Caco-2 (cell line): ENCODE measurements at regions of chrX and their contacts with region 1.

Region 1: GRCh38 chrX:33434256-33435092 is 223.1 kb upstream of the DMD start:
- DNase-seq: peak; percentile 40 to 58
- H3K4me3 ChIP-seq: no peak overlapping the region
- H3K4me3 Mint-ChIP-seq: no peak overlapping the region
- H3K27ac Mint-ChIP-seq: no peak overlapping the region
- H3K4me1 ChIP-seq: no peaks in the 10 kb centered on the region
- H3K4me1 Mint-ChIP-seq: no peaks in the 10 kb centered on the region
- H3K27me3 ChIP-seq: no peaks in the 10 kb centered on the region
- H3K27me3 Mint-ChIP-seq: peaks cover 6% of the 10 kb centered on the region
- CTCF ChIP-seq: peak; percentile 64 to 69

Region 2: GRCh38 chrX:34275699-34276098 is 841.2 kb after region 1 on chrX:
- CTCF ChIA-PET with region 1: no interaction called
- POLR2A ChIA-PET with region 1: no interaction called
- intact Hi-C with region 1: loop called (anchors 1 kb)
- DNase-seq: no peak
- H3K4me3 ChIP-seq: no peak overlapping the region
- H3K4me3 Mint-ChIP-seq: no peak overlapping the region
- H3K27ac Mint-ChIP-seq: no peak overlapping the region
- H3K4me1 ChIP-seq: no peaks in the 10 kb centered on the region
- H3K4me1 Mint-ChIP-seq: no peaks in the 10 kb centered on the region
- H3K27me3 ChIP-seq: no peaks in the 10 kb centered on the region
- H3K27me3 Mint-ChIP-seq: no peaks in the 10 kb centered on the region
- CTCF ChIP-seq: peak in 1 of 2 experiments; percentile 17

Region 3: DNA sequence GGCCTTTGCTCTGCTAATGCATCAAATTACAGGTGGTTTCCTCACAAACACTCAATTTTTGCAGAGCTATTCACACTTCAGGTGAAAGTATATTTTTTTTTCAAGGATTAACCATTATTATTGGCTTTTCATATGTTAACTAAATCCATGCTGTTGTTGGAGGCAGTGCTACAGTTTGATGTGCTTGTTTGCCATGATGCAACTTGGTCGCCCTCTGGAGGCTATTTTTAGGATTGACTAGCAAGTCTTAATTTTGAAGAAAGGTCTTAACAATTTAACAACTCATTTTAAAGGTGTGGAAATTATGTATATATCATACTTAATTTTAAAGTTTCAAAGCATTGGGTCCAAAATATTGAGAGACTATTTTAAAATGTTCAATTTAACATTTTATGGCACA is 866.4 kb after region 1 on chrX:
- CTCF ChIA-PET with region 1: no interaction called
- POLR2A ChIA-PET with region 1: no interaction called
- intact Hi-C with region 1: loop called (anchors 1 kb)
- DNase-seq: peak in 1 of 2 experiments; percentile 38
- H3K4me3 ChIP-seq: no peak overlapping the region
- H3K4me3 Mint-ChIP-seq: no peak overlapping the region
- H3K27ac Mint-ChIP-seq: no peak overlapping the region
- H3K4me1 ChIP-seq: no peaks in the 10 kb centered on the region
- H3K4me1 Mint-ChIP-seq: peaks cover 10% of the 10 kb centered on the region
- H3K27me3 ChIP-seq: no peaks in the 10 kb centered on the region
- H3K27me3 Mint-ChIP-seq: peaks cover 3% of the 10 kb centered on the region
- CTCF ChIP-seq: peak in 1 of 2 experiments; percentile 51

Region 4: GRCh38 chrX:34332334-34332733 is 897.9 kb after region 1 on chrX:
- CTCF ChIA-PET with region 1: interaction called, 3 read pairs
- POLR2A ChIA-PET with region 1: no interaction called
- intact Hi-C with region 1: loop called (anchors 2 kb)
- DNase-seq: peak in 1 of 2 experiments; percentile 0
- H3K4me3 ChIP-seq: no peak overlapping the region
- H3K4me3 Mint-ChIP-seq: no peak overlapping the region
- H3K27ac Mint-ChIP-seq: no peak overlapping the region
- H3K4me1 ChIP-seq: no peaks in the 10 kb centered on the region
- H3K4me1 Mint-ChIP-seq: no peaks in the 10 kb centered on the region
- H3K27me3 ChIP-seq: no peaks in the 10 kb centered on the region
- H3K27me3 Mint-ChIP-seq: no peaks in the 10 kb centered on the region
- CTCF ChIP-seq: peak in 1 of 2 experiments; percentile 28